Endothelial cell of umbilical vein (primary cell): ENCODE measurements at regions of chr7 and their contacts with region 1.

Region 1: DNA sequence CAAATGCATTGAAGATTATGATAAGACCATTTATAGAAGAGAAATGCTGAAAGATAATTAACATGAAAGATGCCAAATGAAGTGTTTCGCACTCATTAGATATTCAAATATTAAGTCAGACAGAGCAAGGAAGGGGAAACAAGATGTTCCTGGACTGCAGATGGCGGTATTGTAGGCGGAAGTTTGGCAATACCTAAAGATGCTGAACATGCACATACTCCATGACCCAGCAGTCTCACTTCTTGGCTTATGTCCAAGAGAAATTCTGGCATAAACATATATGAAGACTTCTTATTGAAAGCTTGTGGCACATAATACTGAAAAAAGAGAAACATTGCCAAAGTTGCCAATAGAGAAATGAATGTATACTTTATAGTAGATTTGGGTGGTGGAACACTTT is 325.4 kb upstream of the SEMA3C start:
- DNase-seq: peak; percentile 36
- H3K4me3 ChIP-seq: no peak overlapping the region
- H3K27ac ChIP-seq: no peak overlapping the region
- H3K4me1 ChIP-seq: no peaks in the 10 kb centered on the region
- H3K27me3 ChIP-seq: no peaks in the 10 kb centered on the region
- CTCF ChIP-seq: no peak
- POLR2A ChIP-seq: no peak

Region 2: GRCh38 chr7:81273601-81274397 is 29.6 kb after region 1 on chr7:
- CTCF ChIA-PET with region 1: no interaction called
- POLR2A ChIA-PET with region 1: no interaction called
- dilution Hi-C with region 1: no loop called
- intact Hi-C with region 1: no loop called
- DNase-seq: no peak
- H3K4me3 ChIP-seq: no peak overlapping the region
- H3K27ac ChIP-seq: no peak overlapping the region
- H3K4me1 ChIP-seq: no peaks in the 10 kb centered on the region
- H3K27me3 ChIP-seq: no peaks in the 10 kb centered on the region
- CTCF ChIP-seq: no peak
- POLR2A ChIP-seq: no peak

Region 3: GRCh38 chr7:81430150-81430549 is 185.9 kb after region 1 on chr7:
- CTCF ChIA-PET with region 1: no interaction called
- POLR2A ChIA-PET with region 1: no interaction called
- dilution Hi-C with region 1: no loop called
- intact Hi-C with region 1: no loop called
- DNase-seq: no peak
- H3K4me3 ChIP-seq: no peak overlapping the region
- H3K27ac ChIP-seq: no peak overlapping the region
- H3K4me1 ChIP-seq: no peaks in the 10 kb centered on the region
- H3K27me3 ChIP-seq: no peaks in the 10 kb centered on the region
- CTCF ChIP-seq: no peak
- POLR2A ChIP-seq: no peak

Region 4: GRCh38 chr7:81447351-81447952 is 203.2 kb after region 1 on chr7:
- CTCF ChIA-PET with region 1: interaction called, 4 read pairs
- POLR2A ChIA-PET with region 1: no interaction called
- dilution Hi-C with region 1: no loop called
- intact Hi-C with region 1: loop called (anchors 5 kb)
- DNase-seq: peak; percentile 14
- H3K4me3 ChIP-seq: no peak overlapping the region
- H3K27ac ChIP-seq: no peak overlapping the region
- H3K4me1 ChIP-seq: no peaks in the 10 kb centered on the region
- H3K27me3 ChIP-seq: no peaks in the 10 kb centered on the region
- CTCF ChIP-seq: peak; percentile 18 to 21
- POLR2A ChIP-seq: no peak

Region 5: GRCh38 chr7:81457852-81458522 is 213.8 kb after region 1 on chr7:
- CTCF ChIA-PET with region 1: interaction called, 10 read pairs
- POLR2A ChIA-PET with region 1: no interaction called
- dilution Hi-C with region 1: no loop called
- intact Hi-C with region 1: no loop called
- DNase-seq: peak; percentile 10
- H3K4me3 ChIP-seq: no peak overlapping the region
- H3K27ac ChIP-seq: no peak overlapping the region
- H3K4me1 ChIP-seq: no peaks in the 10 kb centered on the region
- H3K27me3 ChIP-seq: peaks cover 8 to 13% of the 10 kb centered on the region in 2 experiments
- CTCF ChIP-seq: peak; percentile 12 to 20
- POLR2A ChIP-seq: no peak